Common myeloid progenitor, CD34-positive (primary cell): ENCODE measurements at regions of chr1 and their contacts with region 1.

Region 1: GRCh38 chr1:157490467-157491165 is 61.7 kb downstream of the FCRL5 start:
- DNase-seq: peak; percentile 63 to 78 (median 71)
- H3K4me3 ChIP-seq: no peak overlapping the region
- H3K27ac ChIP-seq: no peak overlapping the region
- H3K4me1 ChIP-seq: peaks cover 0 to 24% (median 15%) of the 10 kb centered on the region in 4 experiments
- H3K27me3 ChIP-seq: peaks cover 0 to 2% (median 0%) of the 10 kb centered on the region in 5 experiments

Region 2: GRCh38 chr1:155809088-155809487 is 1681.5 kb before region 1 on chr1:
- CTCF ChIA-PET with region 1: no interaction called
- POLR2A ChIA-PET with region 1: no interaction called
- DNase-seq: peak; percentile 15 to 75 (median 59)
- H3K4me3 ChIP-seq: peak overlapping the region in 1 of 7 experiments; percentile 19
- H3K27ac ChIP-seq: no peak overlapping the region
- H3K4me1 ChIP-seq: peaks cover 2 to 9% (median 5%) of the 10 kb centered on the region in 4 experiments
- H3K27me3 ChIP-seq: no peaks in the 10 kb centered on the region

Region 3: DNA sequence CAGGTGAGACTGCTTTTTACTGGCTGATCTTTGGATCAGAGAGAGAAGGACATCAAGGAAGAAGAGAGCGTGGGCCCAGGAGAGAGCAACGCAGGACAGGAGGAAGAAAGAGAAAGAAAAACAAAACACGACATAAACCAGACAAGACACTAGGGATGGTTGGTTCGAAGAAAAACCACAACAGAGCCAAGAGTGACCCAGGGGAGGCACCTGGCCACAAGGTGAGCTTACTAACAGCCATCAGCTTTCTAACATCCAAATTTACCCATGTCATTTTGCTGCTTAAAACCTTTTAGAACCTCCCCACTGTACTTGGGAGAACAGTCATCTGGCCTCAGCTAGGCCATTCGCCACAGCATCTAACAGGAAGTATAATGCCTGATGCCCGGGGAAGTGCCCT is 502.9 kb before region 1 on chr1:
- CTCF ChIA-PET with region 1: no interaction called
- POLR2A ChIA-PET with region 1: no interaction called
- DNase-seq: no peak
- H3K4me3 ChIP-seq: no peak overlapping the region
- H3K27ac ChIP-seq: no peak overlapping the region
- H3K4me1 ChIP-seq: no peaks in the 10 kb centered on the region
- H3K27me3 ChIP-seq: no peaks in the 10 kb centered on the region

Region 4: GRCh38 chr1:157380523-157380922 is 110.1 kb before region 1 on chr1:
- CTCF ChIA-PET with region 1: interaction called, 105 read pairs
- POLR2A ChIA-PET with region 1: no interaction called
- DNase-seq: peak in 2 of 3 donors; percentile 54 to 58
- H3K4me3 ChIP-seq: no peak overlapping the region
- H3K27ac ChIP-seq: no peak overlapping the region
- H3K4me1 ChIP-seq: peaks cover 0 to 19% (median 3%) of the 10 kb centered on the region in 4 experiments
- H3K27me3 ChIP-seq: no peaks in the 10 kb centered on the region

Region 5: DNA sequence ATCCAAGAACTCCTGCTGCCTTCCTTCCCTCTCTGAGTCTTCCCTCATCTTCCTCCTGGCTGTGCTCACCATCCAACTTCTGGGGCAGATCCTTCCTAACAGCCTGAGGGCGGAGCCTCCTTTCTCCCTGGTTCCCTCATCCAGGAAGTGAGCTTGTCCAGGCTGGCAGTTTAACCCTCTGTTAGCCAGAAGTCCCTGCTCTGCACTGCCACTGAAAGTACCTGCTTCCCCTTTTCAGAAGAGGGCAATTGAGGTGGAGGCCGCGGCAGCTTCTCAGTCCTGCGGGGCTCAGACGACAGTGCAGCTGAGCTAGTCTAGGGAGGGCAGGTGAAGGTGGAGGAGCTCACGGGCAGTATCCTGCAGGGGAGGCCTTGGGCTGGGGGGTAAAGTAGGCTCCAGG is 87.4 kb before region 1 on chr1:
- CTCF ChIA-PET with region 1: interaction called, 97 read pairs
- POLR2A ChIA-PET with region 1: no interaction called
- DNase-seq: peak; percentile 50 to 85 (median 75)
- H3K4me3 ChIP-seq: peak overlapping the region in 5 of 7 experiments; percentile 36 to 63 (median 52)
- H3K27ac ChIP-seq: peak overlapping the region; percentile 80 to 91
- H3K4me1 ChIP-seq: peaks cover 21 to 84% (median 68%) of the 10 kb centered on the region in 4 experiments
- H3K27me3 ChIP-seq: no peaks in the 10 kb centered on the region

Region 6: GRCh38 chr1:157566484-157567300 is 76.1 kb after region 1 on chr1:
- CTCF ChIA-PET with region 1: no interaction called
- POLR2A ChIA-PET with region 1: no interaction called
- DNase-seq: peak; percentile 77 to 95 (median 93)
- H3K4me3 ChIP-seq: peak overlapping the region in 1 of 7 experiments; percentile 18
- H3K27ac ChIP-seq: no peak overlapping the region
- H3K4me1 ChIP-seq: peaks cover 6 to 38% (median 18%) of the 10 kb centered on the region in 4 experiments
- H3K27me3 ChIP-seq: peaks cover 0 to 7% (median 3%) of the 10 kb centered on the region in 5 experiments